ENCODE measurements at regions of chr19 and their contacts with region 1.

Region 1: DNA sequence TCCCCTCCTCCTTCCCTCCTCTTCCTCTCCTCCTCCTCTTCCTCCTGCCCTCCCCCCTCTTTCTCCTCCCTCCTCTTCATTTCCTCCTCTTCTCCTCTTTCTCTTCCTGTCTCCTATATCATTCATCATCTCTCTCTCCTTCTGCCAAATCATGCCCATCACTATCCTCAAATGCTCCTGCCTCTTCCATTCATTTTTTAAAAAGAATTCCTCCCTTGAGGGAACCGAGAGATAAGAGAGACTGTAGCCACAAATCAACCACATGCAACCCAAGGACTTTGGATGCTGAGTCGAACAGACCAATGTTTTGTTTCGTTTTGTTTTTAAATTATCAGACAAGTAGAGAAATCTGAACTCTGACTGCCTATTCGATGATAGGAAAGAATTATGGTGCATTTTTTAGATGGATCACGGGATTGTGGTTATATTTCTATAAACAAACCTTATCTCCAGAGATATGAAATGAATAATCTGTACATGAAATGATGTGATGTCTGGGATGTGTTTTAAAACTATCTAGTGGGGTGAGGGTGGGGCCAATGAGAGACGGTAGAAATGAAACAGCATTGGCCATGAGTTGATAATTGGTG is 9.5 kb upstream of the ZNF541 start:
- DNase-seq: no peak
- ATAC-seq: peak in 1 of 2 donors; percentile 89

Region 2: DNA sequence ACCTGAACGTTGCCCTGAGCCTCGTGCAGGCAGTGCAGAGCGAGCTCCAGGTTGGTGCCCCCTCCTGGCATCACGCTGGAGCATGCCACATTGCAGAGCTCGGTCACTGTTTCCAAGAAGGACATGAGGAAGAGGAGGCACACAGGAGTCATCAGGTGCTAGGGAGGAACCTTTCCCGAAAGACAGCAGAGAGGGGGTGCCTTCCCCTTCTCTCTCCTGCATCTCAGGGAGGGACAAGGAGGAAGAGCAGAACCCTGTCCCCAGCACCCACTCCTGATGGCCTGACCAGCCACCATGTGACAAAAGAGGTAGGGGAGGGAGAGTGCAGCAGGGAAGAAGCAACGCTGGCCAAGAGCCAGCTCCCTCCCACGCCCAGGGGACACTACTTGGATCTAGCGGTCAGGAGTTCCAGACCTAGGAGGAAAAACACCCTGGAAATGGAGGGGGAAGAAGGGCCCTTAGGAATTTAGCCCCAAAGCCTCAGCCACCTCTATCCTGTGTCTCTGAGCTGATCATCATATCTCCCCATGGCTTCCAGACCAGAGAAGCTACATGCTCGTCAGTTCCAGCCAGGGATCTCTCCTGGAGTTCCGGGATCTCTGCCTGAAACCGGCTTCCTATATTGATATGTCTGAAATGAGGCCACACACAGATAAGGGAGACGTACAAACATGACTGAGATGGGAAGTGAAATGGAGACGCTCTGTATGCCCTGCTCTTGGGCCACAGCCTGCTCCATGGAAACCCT is 50.6 kb before region 1 on chr19:
- intact Hi-C with region 1: loop called in 1 of 2 experiments (anchors 10 kb)
- DNase-seq: no peak
- ATAC-seq: no peak

Measured in left cardiac atrium (tissue), 4 donors.